ENCODE measurements at regions of chr12 and their contacts with region 1.

Region 1: GRCh38 chr12:76763743-76764675 is at the start of gene ZDHHC17:
- DNase-seq: peak; percentile 86 to 96 (median 92)
- ATAC-seq: peak; percentile 81
- H3K4me3 ChIP-seq: peak within 1 kb of the TSS; percentile 95
- H3K4me3 Mint-ChIP-seq: peak within 1 kb of the TSS; percentile 99
- H3K27ac ChIP-seq: peak within 1 kb of the TSS; percentile 85 to 95
- H3K27ac Mint-ChIP-seq: peak within 1 kb of the TSS; percentile 99
- H3K4me1 ChIP-seq: peaks cover 29% of the 10 kb centered on the region
- H3K4me1 Mint-ChIP-seq: peaks cover 60% of the 10 kb centered on the region
- H3K27me3 ChIP-seq: no peaks in the 10 kb centered on the region
- H3K27me3 Mint-ChIP-seq: no peaks in the 10 kb centered on the region
- CTCF ChIP-seq: no peak
- total RNA-seq, gene ZDHHC17: 36.4 to 42.6 TPM

Region 2: GRCh38 chr12:75511116-75512048 is 1252.6 kb before region 1 on chr12 and contains the start of gene KRR1:
- CTCF ChIA-PET with region 1: no interaction called
- POLR2A ChIA-PET with region 1: interaction called, 8 read pairs
- intact Hi-C with region 1: loop called in 1 of 2 experiments (anchors 5 kb)
- DNase-seq: peak; percentile 74 to 98 (median 85)
- ATAC-seq: peak; percentile 97
- H3K4me3 ChIP-seq: peak within 1 kb of the TSS; percentile 81
- H3K4me3 Mint-ChIP-seq: peak within 1 kb of the TSS; percentile 99
- H3K27ac ChIP-seq: peak within 1 kb of the TSS; percentile 81 to 92
- H3K27ac Mint-ChIP-seq: peak within 1 kb of the TSS; percentile 95
- H3K4me1 ChIP-seq: peaks cover 8% of the 10 kb centered on the region
- H3K4me1 Mint-ChIP-seq: peaks cover 38% of the 10 kb centered on the region
- H3K27me3 ChIP-seq: no peaks in the 10 kb centered on the region
- H3K27me3 Mint-ChIP-seq: no peaks in the 10 kb centered on the region
- CTCF ChIP-seq: no peak
- total RNA-seq, gene KRR1: 144 to 148 TPM

Region 3: DNA sequence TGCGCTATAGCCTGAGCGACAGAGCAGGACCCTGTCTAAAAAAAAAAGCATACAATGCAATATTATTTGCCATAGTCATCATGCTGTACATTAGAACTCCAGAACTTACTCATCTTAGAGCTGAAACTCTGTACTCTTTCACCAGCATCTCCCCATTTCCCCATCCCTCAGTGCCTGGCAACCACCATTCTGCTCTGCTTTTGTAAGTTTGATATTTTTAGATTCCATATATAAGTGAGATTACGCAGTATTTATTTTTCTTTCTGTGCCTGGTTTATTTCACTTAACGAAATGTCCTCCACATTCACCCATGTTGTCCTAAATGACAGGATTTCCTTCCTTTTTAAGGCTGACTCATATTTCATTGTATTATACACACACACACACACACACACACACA is 537.6 kb before region 1 on chr12:
- CTCF ChIA-PET with region 1: no interaction called
- POLR2A ChIA-PET with region 1: no interaction called
- intact Hi-C with region 1: no loop called
- DNase-seq: no peak
- ATAC-seq: no peak
- H3K4me3 ChIP-seq: no peak overlapping the region
- H3K4me3 Mint-ChIP-seq: no peak overlapping the region
- H3K27ac ChIP-seq: no peak overlapping the region
- H3K27ac Mint-ChIP-seq: no peak overlapping the region
- H3K4me1 ChIP-seq: no peaks in the 10 kb centered on the region
- H3K4me1 Mint-ChIP-seq: no peaks in the 10 kb centered on the region
- H3K27me3 ChIP-seq: no peaks in the 10 kb centered on the region
- H3K27me3 Mint-ChIP-seq: peaks cover 5% of the 10 kb centered on the region
- CTCF ChIP-seq: no peak

Region 4: DNA sequence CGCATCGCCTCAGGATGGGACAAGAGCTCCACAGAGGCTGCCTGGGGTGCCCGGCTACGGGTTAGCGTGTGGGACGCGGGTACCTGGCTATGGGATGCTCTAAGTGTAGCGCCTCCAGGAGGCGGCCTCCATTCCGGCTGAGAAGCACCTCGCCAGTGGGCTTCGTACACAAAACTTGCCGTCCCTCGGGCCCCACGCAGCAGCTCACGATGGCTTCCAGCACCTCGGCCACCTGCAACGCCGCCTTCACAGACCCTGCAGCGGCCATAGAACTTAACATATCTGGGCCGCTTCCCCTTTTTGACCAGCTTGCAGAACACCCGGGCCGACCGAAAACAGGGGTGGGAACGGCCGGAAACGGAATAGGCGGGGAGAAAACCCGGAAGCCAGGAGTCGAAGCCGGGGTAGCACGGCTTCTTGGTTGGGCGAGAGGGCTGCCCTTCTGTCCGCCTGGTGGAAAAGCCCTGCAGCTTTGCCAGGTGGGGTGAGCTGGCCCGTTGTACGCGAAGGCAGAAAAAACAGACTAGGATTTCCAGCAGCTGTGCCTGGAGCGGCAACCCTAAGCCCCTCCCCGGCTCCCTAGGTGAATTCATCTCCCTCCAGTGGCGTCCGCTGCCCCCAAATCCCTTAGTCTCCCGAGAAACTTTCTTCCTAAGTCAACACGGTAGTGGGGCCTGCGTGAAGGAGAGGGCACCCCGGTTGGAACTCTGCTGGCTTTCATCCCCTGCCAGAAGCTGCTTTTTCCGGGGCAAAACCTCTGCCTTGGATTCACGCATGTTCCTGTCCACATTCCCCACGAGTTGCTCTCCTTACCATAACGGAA is 415.7 kb before region 1 on chr12 and contains the start of gene BBS10:
- CTCF ChIA-PET with region 1: no interaction called
- POLR2A ChIA-PET with region 1: interaction called, 8 read pairs
- intact Hi-C with region 1: loop called in 1 of 2 experiments (anchors 5 kb)
- DNase-seq: peak; percentile 75 to 92 (median 82)
- ATAC-seq: peak; percentile 96
- H3K4me3 ChIP-seq: peak within 1 kb of the TSS; percentile 81
- H3K4me3 Mint-ChIP-seq: peak within 1 kb of the TSS; percentile 96
- H3K27ac ChIP-seq: peak within 1 kb of the TSS; percentile 77
- H3K27ac Mint-ChIP-seq: peak within 1 kb of the TSS; percentile 95
- H3K4me1 ChIP-seq: peaks cover 15% of the 10 kb centered on the region
- H3K4me1 Mint-ChIP-seq: peaks cover 43% of the 10 kb centered on the region
- H3K27me3 ChIP-seq: no peaks in the 10 kb centered on the region
- H3K27me3 Mint-ChIP-seq: no peaks in the 10 kb centered on the region
- CTCF ChIP-seq: peak; percentile 33
- total RNA-seq, gene BBS10: 1.4 TPM

Region 5: GRCh38 chr12:76777765-76778216 is 13.8 kb after region 1 on chr12:
- CTCF ChIA-PET with region 1: interaction called, 3 read pairs
- POLR2A ChIA-PET with region 1: interaction called, 7 read pairs
- intact Hi-C with region 1: loop called in 1 of 2 experiments (anchors 2 kb)
- DNase-seq: peak in 3 of 14 experiments; percentile 24 to 40 (median 30)
- ATAC-seq: peak; percentile 46
- H3K4me3 ChIP-seq: no peak overlapping the region
- H3K4me3 Mint-ChIP-seq: peak overlapping the region; percentile 49
- H3K27ac ChIP-seq: no peak overlapping the region
- H3K27ac Mint-ChIP-seq: peak overlapping the region; percentile 10
- H3K4me1 ChIP-seq: peaks cover 9% of the 10 kb centered on the region
- H3K4me1 Mint-ChIP-seq: peaks cover 91% of the 10 kb centered on the region
- H3K27me3 ChIP-seq: no peaks in the 10 kb centered on the region
- H3K27me3 Mint-ChIP-seq: no peaks in the 10 kb centered on the region
- CTCF ChIP-seq: no peak

Measured in CD4-positive, alpha-beta T cell (primary cell).